WTC11 (cell line): ENCODE measurements at regions of chr6 and their contacts with region 1.

Region 1: DNA sequence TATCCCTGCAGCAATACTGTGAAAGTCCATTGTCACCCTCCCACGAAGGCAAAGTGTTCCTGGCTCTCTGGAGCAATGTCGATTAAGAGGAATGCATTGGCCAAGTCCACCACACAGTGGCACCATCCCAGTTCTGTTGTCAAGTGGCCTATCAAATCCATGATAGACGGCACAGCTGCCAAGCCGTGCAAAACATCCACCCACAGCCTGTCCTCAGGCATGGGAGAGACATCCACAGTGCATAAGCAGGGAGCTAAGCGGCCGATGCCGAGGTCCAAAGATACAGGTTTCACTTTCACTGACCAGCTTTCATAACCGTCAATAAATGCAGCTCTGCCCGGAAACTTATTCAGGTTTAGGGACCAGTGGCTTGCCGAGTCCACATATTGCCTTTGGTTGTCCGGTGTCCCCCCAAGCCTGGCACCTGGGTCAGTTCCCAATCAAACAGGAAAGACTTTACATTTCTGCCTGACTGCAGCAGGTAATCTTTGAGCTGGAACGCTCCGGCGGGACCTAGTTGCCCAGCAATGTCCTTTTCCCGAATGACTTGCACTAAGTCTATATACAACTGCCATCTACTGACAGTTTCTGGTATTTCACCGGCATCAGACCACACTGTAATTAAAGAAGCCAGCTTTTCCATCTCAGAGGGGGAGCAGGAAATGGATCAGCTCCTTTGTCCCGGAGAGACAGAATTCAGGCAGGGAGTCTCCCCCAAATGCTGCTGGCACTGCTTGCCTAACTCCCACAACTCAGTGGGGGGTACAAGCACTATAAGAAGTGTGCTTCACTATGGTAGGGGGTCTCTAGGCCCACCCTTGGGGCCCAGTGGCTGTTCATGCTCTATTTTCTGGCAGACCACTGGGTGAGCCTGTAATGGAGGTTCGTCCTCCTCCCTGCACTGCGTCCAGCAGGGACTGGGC is 6.3 kb downstream of the ZKSCAN3 start:
- DNase-seq: peak; percentile 74
- ATAC-seq: peak; percentile 88
- H3K4me3 Mint-ChIP-seq: peak overlapping the region; percentile 73
- H3K27ac Mint-ChIP-seq: peak overlapping the region; percentile 97
- H3K4me1 Mint-ChIP-seq: peaks cover 27% of the 10 kb centered on the region
- H3K27me3 Mint-ChIP-seq: no peaks in the 10 kb centered on the region; the same call in 1 of the 2 replicates
- CTCF ChIP-seq: peak; percentile 78

Region 2: GRCh38 chr6:28136585-28137504 is 219.2 kb before region 1 on chr6:
- CTCF ChIA-PET with region 1: interaction called, 18 read pairs
- POLR2A ChIA-PET with region 1: no interaction called
- DNase-seq: peak; percentile 86
- ATAC-seq: peak; percentile 75
- H3K4me3 Mint-ChIP-seq: peak overlapping the region; percentile 95
- H3K27ac Mint-ChIP-seq: peak overlapping the region; percentile 92
- H3K4me1 Mint-ChIP-seq: peaks cover 21% of the 10 kb centered on the region
- H3K27me3 Mint-ChIP-seq: peaks cover 34% of the 10 kb centered on the region
- CTCF ChIP-seq: no peak

Region 3: DNA sequence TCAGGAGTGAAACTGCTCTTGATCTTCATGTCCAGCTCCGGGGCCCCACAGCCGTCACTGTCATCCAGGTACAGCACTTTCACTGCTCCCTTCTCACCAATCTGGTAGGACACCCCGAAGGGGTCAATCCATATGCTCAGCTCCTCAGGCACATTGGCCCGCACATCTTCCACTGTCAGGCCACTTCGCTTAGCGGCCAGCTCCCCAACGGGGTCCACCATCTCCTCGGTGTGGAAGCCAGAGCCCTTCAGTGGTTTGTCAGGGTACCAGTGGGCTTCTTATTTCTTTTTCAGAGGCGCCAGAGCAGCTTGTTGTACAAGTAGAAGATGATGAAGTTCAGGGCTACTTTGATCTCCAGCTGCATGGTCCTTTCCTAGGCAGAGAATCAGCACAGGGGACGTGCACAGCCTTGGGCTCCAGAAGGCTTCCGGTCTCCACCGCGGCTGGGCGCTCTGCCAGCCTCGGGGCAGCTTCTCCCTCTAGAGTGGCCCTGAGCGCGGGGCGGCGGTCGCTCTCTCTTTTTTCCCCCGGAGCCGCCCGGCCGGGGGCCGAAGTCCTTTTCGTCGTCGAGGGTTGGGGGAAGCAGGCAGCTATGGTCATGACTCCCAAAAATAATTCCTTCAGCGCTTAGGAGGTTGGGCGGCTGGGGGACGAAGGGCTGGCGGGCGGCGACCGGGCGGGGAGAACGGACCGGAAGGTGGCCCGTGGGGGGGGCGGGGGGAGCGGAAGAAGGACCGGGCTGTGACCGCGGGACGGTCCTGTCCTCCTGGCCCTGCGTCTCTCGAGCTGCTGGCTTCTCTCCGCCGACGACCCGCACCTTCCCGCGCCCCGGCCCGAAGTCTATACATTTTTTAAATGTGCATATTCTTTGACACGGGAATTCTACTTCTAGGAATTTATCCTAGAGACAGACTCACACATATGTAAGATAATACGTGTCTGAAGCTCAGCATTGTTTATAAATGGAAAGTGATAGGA is 137.4 kb before region 1 on chr6:
- CTCF ChIA-PET with region 1: interaction called, 10 read pairs
- POLR2A ChIA-PET with region 1: no interaction called
- DNase-seq: peak; percentile 54
- ATAC-seq: peak; percentile 85
- H3K4me3 Mint-ChIP-seq: peak overlapping the region; percentile 71
- H3K27ac Mint-ChIP-seq: no peak overlapping the region
- H3K4me1 Mint-ChIP-seq: peaks cover 24% of the 10 kb centered on the region
- H3K27me3 Mint-ChIP-seq: peaks cover 94% of the 10 kb centered on the region
- CTCF ChIP-seq: no peak

Region 4: GRCh38 chr6:28252009-28252975 is 103.7 kb before region 1 on chr6 and contains the start of gene ZKSCAN4:
- CTCF ChIA-PET with region 1: interaction called, 19 read pairs
- POLR2A ChIA-PET with region 1: no interaction called
- DNase-seq: peak; percentile 79
- ATAC-seq: peak; percentile 92
- H3K4me3 Mint-ChIP-seq: peak within 1 kb of the TSS; percentile 99
- H3K27ac Mint-ChIP-seq: peak within 1 kb of the TSS; percentile 80
- H3K4me1 Mint-ChIP-seq: peaks cover 12% of the 10 kb centered on the region
- H3K27me3 Mint-ChIP-seq: peaks cover 18% of the 10 kb centered on the region
- CTCF ChIP-seq: no peak
- total RNA-seq, gene ZKSCAN4: 6.4 to 7.3 TPM (median 7.0 TPM) in 3 replicates

Region 5: GRCh38 chr6:28281288-28282064 is 74.5 kb before region 1 on chr6 and contains the start of gene PGBD1:
- CTCF ChIA-PET with region 1: interaction called, 26 read pairs
- POLR2A ChIA-PET with region 1: interaction called, 3 read pairs
- DNase-seq: peak; percentile 92
- ATAC-seq: peak; percentile 97
- H3K4me3 Mint-ChIP-seq: peak within 1 kb of the TSS; percentile 97
- H3K27ac Mint-ChIP-seq: no peak within 1 kb of the TSS
- H3K4me1 Mint-ChIP-seq: peaks cover 14% of the 10 kb centered on the region
- H3K27me3 Mint-ChIP-seq: peaks cover 4% of the 10 kb centered on the region; the same call in 1 of the 2 replicates
- CTCF ChIP-seq: no peak
- total RNA-seq, gene PGBD1: 6.8 to 7.5 TPM (median 6.9 TPM) in 3 replicates

Region 6: DNA sequence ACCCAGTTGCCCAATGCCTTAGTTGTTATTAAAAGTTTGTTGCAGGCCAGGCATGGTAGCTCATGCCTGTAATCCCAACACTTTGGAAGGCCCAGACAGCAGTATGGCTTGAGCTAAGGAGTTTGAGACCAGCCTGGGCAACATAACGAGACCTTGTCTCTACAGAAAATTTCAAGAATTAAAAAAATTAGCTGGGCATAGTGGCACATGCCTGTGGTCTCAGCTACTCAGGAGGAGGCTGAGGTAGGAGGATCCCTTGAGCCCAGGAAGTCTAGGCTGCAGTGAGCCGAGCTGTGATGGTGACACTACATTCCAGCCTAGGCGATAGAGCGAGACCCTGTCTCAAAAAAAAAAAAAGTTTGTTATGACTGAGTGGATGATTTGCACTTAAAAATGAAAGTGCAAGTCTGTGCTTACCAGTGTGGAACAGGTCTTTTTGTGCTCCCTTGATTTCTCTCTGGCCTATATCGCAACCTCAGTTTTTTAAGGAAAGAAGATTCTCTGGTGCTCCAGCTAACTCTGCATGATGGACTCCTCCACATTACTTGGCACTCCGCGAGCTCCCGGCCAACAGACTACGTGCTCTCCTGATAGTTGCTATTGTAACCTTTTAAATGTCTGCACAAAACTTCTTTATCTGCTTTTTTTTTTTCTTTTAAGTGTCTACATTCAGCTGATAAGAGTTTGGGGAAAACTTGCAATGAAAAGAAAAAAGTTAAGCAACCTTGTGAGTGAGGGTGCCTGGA is 15.9 kb after region 1 on chr6:
- CTCF ChIA-PET with region 1: interaction called, 12 read pairs
- POLR2A ChIA-PET with region 1: no interaction called
- DNase-seq: no peak
- ATAC-seq: no peak
- H3K4me3 Mint-ChIP-seq: no peak overlapping the region
- H3K27ac Mint-ChIP-seq: no peak overlapping the region
- H3K4me1 Mint-ChIP-seq: no peaks in the 10 kb centered on the region
- H3K27me3 Mint-ChIP-seq: no peaks in the 10 kb centered on the region
- CTCF ChIP-seq: no peak

Region 7: DNA sequence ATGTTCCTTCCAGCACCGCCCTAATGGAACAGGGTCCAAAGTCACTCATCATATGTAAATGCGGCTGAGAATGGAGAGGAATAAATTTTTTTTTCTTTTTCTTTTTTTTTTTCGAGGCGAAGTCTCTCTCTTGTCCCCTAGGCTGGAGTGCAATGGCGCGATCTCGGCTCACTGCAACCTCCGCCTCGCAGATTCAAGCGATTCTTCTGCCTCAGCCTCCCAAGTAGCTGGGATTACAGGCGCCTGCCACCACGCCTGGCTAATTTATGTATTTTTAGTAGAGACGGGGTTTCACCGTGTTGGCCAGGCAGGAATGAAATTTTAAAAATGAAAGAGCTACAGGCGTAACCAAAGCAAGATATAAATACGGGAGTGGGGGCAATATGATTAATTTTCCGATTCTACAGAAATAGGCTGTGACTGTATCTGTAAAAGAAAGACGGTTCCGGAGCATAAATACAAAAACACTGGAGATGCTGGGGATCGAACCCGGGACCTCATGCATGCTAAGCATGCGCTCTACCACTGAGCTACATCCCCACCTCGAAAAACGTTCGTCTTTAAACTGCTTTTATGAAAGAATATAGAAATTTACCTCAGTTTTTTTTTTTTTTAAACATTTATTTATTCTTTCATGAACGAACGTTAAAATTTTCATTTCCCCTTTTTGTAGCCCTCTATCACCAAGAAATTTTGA is 301.9 kb after region 1 on chr6:
- CTCF ChIA-PET with region 1: no interaction called
- POLR2A ChIA-PET with region 1: no interaction called
- DNase-seq: peak; percentile 67
- ATAC-seq: peak; percentile 77
- H3K4me3 Mint-ChIP-seq: peak overlapping the region; percentile 93
- H3K27ac Mint-ChIP-seq: no peak overlapping the region; the same call in 1 of the 2 replicates
- H3K4me1 Mint-ChIP-seq: peaks cover 14% of the 10 kb centered on the region
- H3K27me3 Mint-ChIP-seq: no peaks in the 10 kb centered on the region
- CTCF ChIP-seq: no peak